Posterior cingulate gyrus (tissue), 11 donors: ENCODE measurements at regions of chr20 and their contacts with region 1.

Region 1: DNA sequence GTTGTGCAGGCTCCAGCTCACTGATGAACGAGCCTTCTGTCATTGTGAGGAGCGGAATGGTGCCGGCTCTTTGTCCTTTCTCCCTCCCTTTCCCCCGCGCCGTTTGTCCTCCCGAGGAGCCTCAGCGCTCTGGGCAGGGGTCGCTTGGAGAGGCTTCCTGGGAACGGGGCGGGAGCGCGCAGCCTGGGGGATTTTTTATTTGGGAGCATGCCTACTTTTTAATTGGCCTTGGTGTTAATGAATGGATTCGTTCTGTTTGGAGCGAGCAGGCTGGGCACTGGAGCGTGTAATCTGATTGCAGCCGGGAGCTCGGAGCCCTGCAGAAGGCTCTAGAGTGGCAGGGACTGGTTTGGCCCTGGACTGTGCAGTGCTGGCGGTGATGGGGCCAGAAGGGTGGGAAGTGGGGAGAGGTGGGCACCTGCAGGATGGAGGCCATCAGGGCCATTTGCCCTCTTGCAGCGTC is 118.8 kb downstream of the CDH4 start:
- DNase-seq: peak in 9 of 10 donors; percentile 33 to 86 (median 52)

Region 2: GRCh38 chr20:61263084-61263695 is 107.7 kb before region 1 on chr20:
- intact Hi-C with region 1: loop called (anchors 5 kb)
- DNase-seq: peak in 5 of 10 donors; percentile 36 to 84 (median 46)